Activated CD4-positive, alpha-beta T cell treated with anti-CD3 and anti-CD28 coated beads for 36 hours (primary cell): ENCODE measurements at regions of chr7 and their contacts with region 1.

Region 1: DNA sequence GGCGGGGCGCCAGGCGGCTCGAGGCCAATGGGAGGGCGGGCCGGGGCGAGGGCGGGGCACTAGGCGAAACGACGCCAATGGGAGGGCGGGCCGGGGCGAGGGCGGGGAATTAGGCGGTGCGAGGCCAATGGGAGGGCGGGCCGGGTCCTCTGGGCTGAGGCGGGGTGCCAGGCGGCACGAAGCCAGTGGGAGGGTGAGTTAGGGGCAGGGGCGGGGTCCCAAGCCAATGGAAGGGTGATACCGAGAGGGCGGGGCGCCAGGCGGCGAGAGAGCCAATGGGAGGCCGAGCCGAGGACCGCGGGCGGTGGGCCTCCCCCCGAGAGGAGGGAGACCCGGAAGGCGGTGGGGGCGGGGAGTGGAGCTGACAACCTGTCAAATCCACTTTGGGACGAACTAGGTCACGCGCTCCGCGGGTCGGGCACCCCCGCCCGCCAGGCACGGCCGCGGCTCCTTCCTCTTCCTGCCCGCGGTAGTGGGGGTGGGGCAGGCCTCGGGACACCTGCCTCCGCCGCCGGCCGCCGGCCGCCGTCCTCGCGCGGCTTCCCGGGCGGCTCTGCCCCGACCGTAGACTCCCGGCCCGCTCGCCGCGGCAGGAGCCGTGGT is 28.0 kb upstream of the KMT2C start:
- DNase-seq: peak; percentile 100
- ATAC-seq: peak; percentile 95
- H3K4me3 Mint-ChIP-seq: peak overlapping the region; percentile 88
- H3K27ac Mint-ChIP-seq: no peak overlapping the region
- H3K4me1 Mint-ChIP-seq: peaks cover 5% of the 10 kb centered on the region
- H3K27me3 Mint-ChIP-seq: no peaks in the 10 kb centered on the region

Region 2: DNA sequence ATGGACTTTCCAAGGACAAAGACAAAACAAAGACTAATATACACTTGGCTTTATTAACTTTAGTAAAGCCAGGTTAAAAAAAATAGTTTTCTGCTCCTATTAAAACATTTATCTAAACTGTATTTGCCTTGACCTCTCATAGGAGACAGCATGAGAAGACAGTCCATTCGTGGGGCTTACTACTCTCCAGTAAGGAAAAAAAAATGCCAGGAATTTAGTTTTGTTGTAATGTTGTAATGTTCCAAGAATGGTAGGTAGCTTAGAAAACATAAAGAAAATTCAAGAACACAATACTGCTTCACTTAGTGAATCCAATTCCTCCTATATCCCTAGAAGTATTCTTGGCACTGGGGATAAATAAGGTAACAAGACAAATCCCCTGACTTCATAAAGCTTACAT is 109.7 kb before region 1 on chr7:
- CTCF ChIA-PET with region 1: no interaction called
- POLR2A ChIA-PET with region 1: no interaction called
- intact Hi-C with region 1: no loop called
- DNase-seq: no peak
- ATAC-seq: no peak
- H3K4me3 Mint-ChIP-seq: no peak overlapping the region
- H3K27ac Mint-ChIP-seq: no peak overlapping the region
- H3K4me1 Mint-ChIP-seq: peaks cover 7% of the 10 kb centered on the region
- H3K27me3 Mint-ChIP-seq: no peaks in the 10 kb centered on the region

Region 3: DNA sequence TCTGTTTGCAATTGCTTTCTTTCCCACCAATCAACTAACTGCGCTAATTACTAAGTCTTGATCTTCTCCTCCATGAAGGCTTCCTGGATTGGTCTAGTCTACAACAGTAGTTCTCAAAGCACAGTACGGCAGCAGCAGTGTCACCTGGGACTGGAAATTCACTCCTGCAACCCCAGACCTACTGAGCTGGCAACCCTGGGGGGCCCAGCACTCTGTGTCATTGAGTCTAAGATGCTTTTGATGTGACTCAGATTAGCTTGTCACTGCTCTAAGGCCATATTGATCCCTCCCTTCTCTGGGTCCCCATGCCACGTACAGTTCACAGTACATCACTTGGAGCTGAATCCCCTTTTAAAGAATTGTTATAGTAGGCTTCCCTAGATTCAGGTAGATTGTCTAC is 37.7 kb after region 1 on chr7:
- CTCF ChIA-PET with region 1: no interaction called
- POLR2A ChIA-PET with region 1: no interaction called
- intact Hi-C with region 1: no loop called
- DNase-seq: no peak
- ATAC-seq: no peak
- H3K4me3 Mint-ChIP-seq: no peak overlapping the region
- H3K27ac Mint-ChIP-seq: no peak overlapping the region
- H3K4me1 Mint-ChIP-seq: no peaks in the 10 kb centered on the region
- H3K27me3 Mint-ChIP-seq: no peaks in the 10 kb centered on the region

Region 4: GRCh38 chr7:152512706-152513105 is 48.9 kb after region 1 on chr7:
- CTCF ChIA-PET with region 1: no interaction called
- POLR2A ChIA-PET with region 1: no interaction called
- intact Hi-C with region 1: loop called in 1 of 2 experiments (anchors 2 kb)
- DNase-seq: peak; percentile 33
- ATAC-seq: peak; percentile 97
- H3K4me3 Mint-ChIP-seq: peak overlapping the region; percentile 49
- H3K27ac Mint-ChIP-seq: peak overlapping the region; percentile 31
- H3K4me1 Mint-ChIP-seq: peaks cover 11% of the 10 kb centered on the region
- H3K27me3 Mint-ChIP-seq: no peaks in the 10 kb centered on the region

Region 5: GRCh38 chr7:152643979-152644559 is 180.3 kb after region 1 on chr7:
- CTCF ChIA-PET with region 1: no interaction called
- POLR2A ChIA-PET with region 1: no interaction called
- intact Hi-C with region 1: no loop called
- DNase-seq: no peak
- ATAC-seq: no peak
- H3K4me3 Mint-ChIP-seq: no peak overlapping the region
- H3K27ac Mint-ChIP-seq: no peak overlapping the region
- H3K4me1 Mint-ChIP-seq: no peaks in the 10 kb centered on the region
- H3K27me3 Mint-ChIP-seq: no peaks in the 10 kb centered on the region

Region 6: DNA sequence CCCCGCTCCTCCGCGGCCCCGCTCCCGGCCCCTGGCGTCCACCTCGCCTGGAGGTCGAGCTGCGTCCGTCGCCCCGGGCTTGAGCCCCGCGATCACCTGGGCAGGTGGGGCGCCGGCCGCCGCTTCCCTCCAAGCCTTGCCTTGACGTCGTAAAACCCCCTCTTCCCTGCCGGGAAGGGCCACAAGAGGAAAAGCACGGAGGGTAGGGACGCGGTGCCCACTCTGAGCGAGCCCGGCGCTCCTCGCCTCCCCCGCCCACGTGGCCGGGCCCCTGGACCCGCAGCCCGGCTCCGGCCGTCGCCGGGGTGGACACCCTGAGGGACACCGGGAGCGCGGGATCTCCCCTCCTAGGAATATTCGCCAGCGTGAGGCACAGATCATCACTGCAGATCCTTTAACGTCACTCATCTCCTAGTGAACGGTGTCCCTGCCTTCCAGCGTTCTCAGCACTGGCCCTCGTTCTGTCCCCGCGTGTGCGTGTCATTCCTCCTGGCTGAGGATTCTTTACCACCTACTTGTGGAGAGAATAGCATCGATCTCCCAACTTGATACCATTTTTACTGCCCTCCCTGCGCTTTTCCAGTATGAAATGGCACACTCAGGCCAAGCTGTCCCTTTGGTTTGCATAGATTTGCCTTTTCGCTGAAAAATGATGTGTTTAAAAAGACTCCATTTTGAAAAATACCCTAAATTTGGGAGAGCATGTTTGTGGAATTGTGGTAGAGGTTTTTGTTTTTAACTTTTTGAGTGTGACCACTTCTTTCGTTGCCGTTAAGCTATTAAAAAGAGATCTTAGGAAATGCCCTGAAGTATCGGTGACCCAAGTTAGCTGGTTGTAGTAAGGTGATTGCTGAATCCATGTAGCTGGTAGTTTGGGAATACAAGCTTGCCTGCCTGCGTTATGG is 296.4 kb after region 1 on chr7:
- CTCF ChIA-PET with region 1: no interaction called
- POLR2A ChIA-PET with region 1: no interaction called
- intact Hi-C with region 1: loop called in 1 of 2 experiments (anchors 1 kb)
- DNase-seq: peak; percentile 42
- ATAC-seq: peak; percentile 21
- H3K4me3 Mint-ChIP-seq: peak overlapping the region; percentile 91
- H3K27ac Mint-ChIP-seq: peak overlapping the region; percentile 91
- H3K4me1 Mint-ChIP-seq: peaks cover 20% of the 10 kb centered on the region
- H3K27me3 Mint-ChIP-seq: no peaks in the 10 kb centered on the region

Region 7: GRCh38 chr7:152949253-152949652 is 485.4 kb after region 1 on chr7:
- CTCF ChIA-PET with region 1: no interaction called
- POLR2A ChIA-PET with region 1: no interaction called
- intact Hi-C with region 1: no loop called
- DNase-seq: no peak
- ATAC-seq: no peak
- H3K4me3 Mint-ChIP-seq: no peak overlapping the region
- H3K27ac Mint-ChIP-seq: no peak overlapping the region
- H3K4me1 Mint-ChIP-seq: peaks cover under 1% of the 10 kb centered on the region
- H3K27me3 Mint-ChIP-seq: peaks cover 5% of the 10 kb centered on the region